ENCODE measurements at regions of chr2 and their contacts with region 1.

Region 1: DNA sequence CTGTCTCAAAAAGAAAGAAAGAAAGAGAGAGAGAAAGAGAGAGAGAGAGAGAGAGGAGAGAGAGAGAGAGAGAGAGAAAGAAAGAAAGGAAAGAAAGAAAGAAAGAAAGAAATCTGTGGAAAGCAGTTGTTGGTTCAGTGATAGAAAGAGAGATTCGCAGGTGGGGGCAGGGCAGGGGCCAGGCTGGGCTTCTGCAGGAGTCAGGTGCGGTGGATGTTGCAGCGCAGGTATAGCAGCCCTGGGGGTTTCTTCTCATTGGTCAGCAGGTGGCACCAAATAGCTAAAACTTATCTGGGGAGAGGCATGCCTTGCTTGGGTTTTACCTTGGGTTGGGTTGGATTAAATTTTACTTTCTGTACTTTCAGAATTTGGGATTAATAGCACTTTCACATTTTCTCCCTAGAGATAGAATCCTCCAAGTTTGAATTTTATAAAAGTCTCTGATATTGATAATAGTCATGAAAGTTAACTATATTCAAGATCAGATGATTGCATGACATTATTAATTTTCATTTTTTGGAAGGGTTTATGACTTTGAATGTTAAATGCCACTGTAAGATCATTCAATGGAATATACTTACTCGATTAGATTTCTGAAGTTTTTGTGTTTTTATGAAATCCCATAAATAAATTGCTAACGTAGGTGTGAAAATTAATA is 66.6 kb downstream of the SPTBN1 start:
- DNase-seq: peak; percentile 76
- ATAC-seq: peak; percentile 86
- H3K4me3 Mint-ChIP-seq: no peak overlapping the region
- H3K27ac Mint-ChIP-seq: no peak overlapping the region
- H3K4me1 Mint-ChIP-seq: peaks cover 15% of the 10 kb centered on the region
- H3K27me3 Mint-ChIP-seq: peaks cover 2% of the 10 kb centered on the region

Region 2: DNA sequence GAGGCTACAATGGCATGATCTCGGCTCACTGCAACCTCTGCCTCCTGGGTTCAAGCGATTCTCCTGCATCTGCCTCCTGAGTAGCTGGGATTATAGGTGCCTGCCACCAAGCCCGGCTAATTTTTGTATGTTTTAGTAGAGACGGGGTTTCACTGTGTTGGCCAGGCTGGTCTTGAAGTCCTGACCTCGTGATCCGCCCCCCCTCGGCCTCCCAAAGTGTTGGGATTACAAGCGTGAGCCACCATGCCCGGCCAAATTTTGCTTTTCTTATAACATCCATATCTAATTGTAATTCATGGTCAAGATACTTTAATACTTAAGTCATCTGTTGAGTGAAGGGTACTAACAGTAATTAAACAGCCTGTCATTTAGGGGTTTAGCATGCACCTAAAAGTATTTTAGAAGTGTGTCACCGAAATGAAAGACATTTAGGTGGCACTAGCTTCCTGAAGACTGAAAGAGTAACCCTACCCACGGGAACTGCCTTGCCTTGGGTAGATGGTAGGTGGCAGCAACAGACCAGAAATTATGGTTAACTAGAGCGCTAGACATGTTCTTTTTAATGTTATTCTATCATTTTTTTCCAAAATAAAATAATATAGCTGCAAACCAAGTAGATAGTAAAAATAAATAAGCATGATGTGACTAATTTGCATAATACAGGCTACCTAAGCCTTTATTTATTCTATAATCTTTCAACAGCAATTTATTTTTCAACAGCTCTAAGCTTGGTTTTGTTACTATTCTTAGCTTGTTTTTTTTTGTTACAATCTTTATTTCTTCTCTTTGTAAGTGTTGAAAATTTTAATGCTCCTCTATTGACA is 415.9 kb before region 1 on chr2:
- CTCF ChIA-PET with region 1: no interaction called
- POLR2A ChIA-PET with region 1: no interaction called
- intact Hi-C with region 1: loop called in 1 of 2 experiments (anchors 5 kb)
- DNase-seq: peak; percentile 61
- ATAC-seq: peak; percentile 82
- H3K4me3 Mint-ChIP-seq: no peak overlapping the region
- H3K27ac Mint-ChIP-seq: no peak overlapping the region
- H3K4me1 Mint-ChIP-seq: peaks cover 9% of the 10 kb centered on the region
- H3K27me3 Mint-ChIP-seq: peaks cover 2% of the 10 kb centered on the region

Region 3: DNA sequence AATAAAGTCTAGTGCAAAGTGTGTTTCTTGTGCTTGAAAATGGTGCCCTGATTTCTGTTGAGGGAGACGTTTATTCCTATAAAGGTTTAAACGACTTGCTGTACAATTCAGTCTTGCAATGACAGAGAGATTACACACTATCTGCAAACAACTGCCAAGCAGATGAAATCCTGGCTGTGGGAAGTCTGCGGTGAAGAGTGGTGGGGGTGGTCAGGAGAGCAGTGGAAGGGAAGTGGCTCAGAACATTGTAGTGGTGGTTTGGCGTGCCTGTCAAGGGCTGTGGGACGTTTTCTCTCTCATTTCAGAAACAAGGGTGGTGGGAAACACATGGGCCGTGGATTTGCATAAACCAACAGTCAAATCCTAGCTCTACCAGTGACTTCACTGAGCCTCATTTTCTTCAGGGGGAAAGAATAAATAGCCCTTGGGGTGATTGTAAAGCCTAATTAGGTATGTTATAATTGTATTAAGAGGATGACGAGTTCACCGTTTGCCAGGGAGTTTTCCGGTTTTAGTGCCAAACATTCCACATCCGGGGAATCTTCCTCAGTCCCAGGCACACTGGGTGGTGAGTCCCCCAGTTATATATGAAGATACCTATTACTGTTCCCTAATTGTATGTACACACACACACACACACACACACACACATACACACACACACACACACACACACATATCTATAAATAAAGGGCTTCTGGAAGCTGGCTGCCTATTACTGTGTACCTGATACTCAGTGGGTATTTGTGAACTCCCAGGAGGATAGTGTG is 48.4 kb after region 1 on chr2:
- CTCF ChIA-PET with region 1: no interaction called
- POLR2A ChIA-PET with region 1: no interaction called
- intact Hi-C with region 1: loop called in 1 of 2 experiments (anchors 5 kb)
- DNase-seq: peak; percentile 90
- ATAC-seq: peak; percentile 50
- H3K4me3 Mint-ChIP-seq: peak overlapping the region; percentile 65
- H3K27ac Mint-ChIP-seq: peak overlapping the region; percentile 99
- H3K4me1 Mint-ChIP-seq: peaks cover 90% of the 10 kb centered on the region
- H3K27me3 Mint-ChIP-seq: no peaks in the 10 kb centered on the region

Region 4: GRCh38 chr2:54657664-54658083 is 134.9 kb after region 1 on chr2:
- CTCF ChIA-PET with region 1: interaction called, 10 read pairs
- POLR2A ChIA-PET with region 1: no interaction called
- intact Hi-C with region 1: loop called (anchors 2 to 5 kb)
- DNase-seq: peak; percentile 64
- ATAC-seq: no peak
- H3K4me3 Mint-ChIP-seq: no peak overlapping the region
- H3K27ac Mint-ChIP-seq: peak overlapping the region; percentile 72
- H3K4me1 Mint-ChIP-seq: peaks cover 15% of the 10 kb centered on the region
- H3K27me3 Mint-ChIP-seq: no peaks in the 10 kb centered on the region

Region 5: GRCh38 chr2:54673501-54673998 is 150.8 kb after region 1 on chr2:
- CTCF ChIA-PET with region 1: interaction called, 10 read pairs
- POLR2A ChIA-PET with region 1: no interaction called
- intact Hi-C with region 1: no loop called
- DNase-seq: peak; percentile 75
- ATAC-seq: peak; percentile 95
- H3K4me3 Mint-ChIP-seq: no peak overlapping the region
- H3K27ac Mint-ChIP-seq: no peak overlapping the region
- H3K4me1 Mint-ChIP-seq: peaks cover 14% of the 10 kb centered on the region
- H3K27me3 Mint-ChIP-seq: peaks cover 39% of the 10 kb centered on the region

Region 6: DNA sequence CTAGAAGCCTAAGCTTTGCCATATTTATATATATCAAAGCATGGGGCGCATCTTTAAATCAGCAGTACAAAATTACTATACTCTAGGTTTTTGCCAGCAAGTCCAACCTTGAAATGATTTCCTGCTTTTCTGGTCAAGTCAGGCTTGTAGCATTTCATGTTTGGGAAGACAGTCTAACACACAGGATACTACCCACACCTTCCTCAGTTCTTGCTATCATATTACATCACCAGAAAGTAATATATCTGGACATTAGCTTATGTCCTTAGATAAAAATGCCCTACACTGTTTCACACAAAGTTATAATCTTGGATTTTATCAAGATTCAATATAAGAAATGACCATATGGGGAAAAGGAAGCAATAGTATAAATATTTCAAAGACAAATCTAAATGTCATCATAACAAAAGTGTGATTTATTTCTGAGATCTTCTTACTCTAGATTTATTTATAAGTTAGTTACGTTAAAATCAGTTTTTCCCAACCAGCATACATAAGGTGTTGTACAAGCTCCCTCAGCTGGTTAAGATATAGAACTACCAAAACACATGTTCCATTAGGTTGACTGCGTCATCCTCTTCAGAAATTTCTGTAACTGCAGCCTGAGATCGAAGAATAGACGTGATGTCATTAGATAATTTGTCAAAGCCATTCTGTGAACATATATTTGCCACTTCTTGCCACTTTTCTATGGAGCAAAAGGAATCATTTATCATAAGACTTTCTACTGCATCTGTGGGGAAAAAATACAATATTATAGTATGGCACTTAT is 652.7 kb after region 1 on chr2:
- CTCF ChIA-PET with region 1: no interaction called
- POLR2A ChIA-PET with region 1: no interaction called
- intact Hi-C with region 1: loop called in 1 of 2 experiments (anchors 10 kb)
- DNase-seq: no peak
- ATAC-seq: peak; percentile 78
- H3K4me3 Mint-ChIP-seq: no peak overlapping the region
- H3K27ac Mint-ChIP-seq: no peak overlapping the region
- H3K4me1 Mint-ChIP-seq: peaks cover 8% of the 10 kb centered on the region
- H3K27me3 Mint-ChIP-seq: no peaks in the 10 kb centered on the region

Region 7: GRCh38 chr2:55693181-55694134 is 1170.7 kb after region 1 on chr2 and contains the start of gene PNPT1:
- CTCF ChIA-PET with region 1: no interaction called
- POLR2A ChIA-PET with region 1: no interaction called
- intact Hi-C with region 1: no loop called
- DNase-seq: peak; percentile 97
- ATAC-seq: peak; percentile 100
- H3K4me3 Mint-ChIP-seq: peak within 1 kb of the TSS; percentile 98
- H3K27ac Mint-ChIP-seq: peak within 1 kb of the TSS; percentile 96
- H3K4me1 Mint-ChIP-seq: peaks cover 32% of the 10 kb centered on the region
- H3K27me3 Mint-ChIP-seq: no peaks in the 10 kb centered on the region
- total RNA-seq, gene PNPT1: 41.1 to 54.0 TPM